Activated naive CD4-positive, alpha-beta T cell treated with anti-CD3 and anti-CD28 coated beads, Interleukin-2, amount 10 ng/mL, durations not matched to agents 7 days and 5 days (primary cell): ENCODE measurements at regions of chr1 and their contacts with region 1.

Region 1: DNA sequence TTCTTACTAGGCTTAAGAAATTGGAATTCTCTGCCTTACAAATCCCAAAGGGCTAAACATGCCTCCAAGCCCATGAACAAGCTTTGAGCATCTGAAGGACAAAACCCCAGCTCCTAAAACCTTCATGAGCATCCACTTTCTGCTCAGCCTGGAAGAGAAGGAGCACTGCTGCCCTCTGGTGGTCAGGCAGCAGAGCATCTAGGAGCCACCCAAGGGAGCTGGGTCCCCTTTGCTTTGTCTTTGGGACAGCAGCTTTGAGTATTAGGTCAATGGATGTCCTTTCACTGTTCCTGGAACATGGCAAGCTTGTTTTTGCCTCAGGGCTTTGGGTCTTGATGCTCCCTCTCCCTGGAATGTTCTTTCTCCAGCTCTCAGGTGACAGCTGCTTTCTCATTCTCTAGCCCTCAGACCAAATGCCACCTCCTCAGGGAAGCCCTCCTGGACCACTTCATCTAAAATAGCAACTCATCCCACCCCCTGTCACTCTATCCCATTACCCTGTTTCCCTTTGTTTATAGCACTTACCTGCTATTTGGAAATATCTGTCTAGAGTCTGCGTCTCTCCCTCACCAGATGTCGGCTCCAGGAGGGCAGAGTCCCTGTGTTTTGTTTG is 25.7 kb downstream of the RAB7B start:
- DNase-seq: peak; percentile 85
- H3K4me3 Mint-ChIP-seq: no peak overlapping the region
- H3K27ac Mint-ChIP-seq: no peak overlapping the region
- H3K4me1 Mint-ChIP-seq: no peaks in the 10 kb centered on the region
- H3K27me3 Mint-ChIP-seq: no peaks in the 10 kb centered on the region

Region 2: GRCh38 chr1:205591522-205592351 is 385.8 kb before region 1 on chr1:
- CTCF ChIA-PET with region 1: interaction called, 16 read pairs
- DNase-seq: peak; percentile 93
- H3K4me3 Mint-ChIP-seq: peak overlapping the region; percentile 84
- H3K27ac Mint-ChIP-seq: peak overlapping the region; percentile 89
- H3K4me1 Mint-ChIP-seq: peaks cover 56% of the 10 kb centered on the region
- H3K27me3 Mint-ChIP-seq: peaks cover 9% of the 10 kb centered on the region

Region 3: GRCh38 chr1:205791568-205792180 is 185.8 kb before region 1 on chr1:
- CTCF ChIA-PET with region 1: interaction called, 186 read pairs
- DNase-seq: peak; percentile 76
- H3K4me3 Mint-ChIP-seq: no peak overlapping the region
- H3K27ac Mint-ChIP-seq: no peak overlapping the region
- H3K4me1 Mint-ChIP-seq: no peaks in the 10 kb centered on the region
- H3K27me3 Mint-ChIP-seq: no peaks in the 10 kb centered on the region

Region 4: DNA sequence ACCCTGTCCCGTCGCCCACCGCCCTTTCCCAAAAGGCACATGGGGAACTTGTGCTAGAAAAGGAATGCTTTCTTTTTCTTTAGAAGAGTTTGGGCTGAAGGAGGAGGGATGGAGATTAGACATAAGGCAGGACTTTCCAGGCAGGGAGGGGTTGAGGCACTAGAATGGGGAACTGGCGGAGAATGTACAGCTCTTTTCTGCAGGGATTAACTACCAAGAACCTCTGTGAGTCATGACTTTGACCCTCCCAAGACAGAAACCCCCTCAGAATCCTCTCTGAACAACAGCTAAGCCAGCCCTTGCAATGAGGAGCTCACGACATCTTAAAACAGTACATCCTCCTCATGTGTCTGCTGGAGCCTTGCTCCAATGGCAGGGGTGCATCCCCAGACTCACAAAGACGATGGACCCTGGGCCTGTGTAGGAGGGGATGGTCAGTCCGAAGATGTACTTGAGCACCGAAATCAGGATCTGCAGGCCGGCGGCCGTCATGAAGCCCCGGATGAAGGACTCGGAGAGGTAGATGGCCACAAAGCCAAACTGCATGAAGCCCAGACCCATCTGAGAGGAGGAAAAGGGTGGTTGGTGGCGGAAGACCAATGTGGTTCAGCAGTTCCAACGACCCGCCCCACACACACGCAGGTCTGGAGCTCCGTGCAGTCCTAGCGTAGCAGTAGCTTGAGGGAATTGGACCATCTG is 47.9 kb before region 1 on chr1:
- CTCF ChIA-PET with region 1: interaction called, 10 read pairs
- DNase-seq: no peak
- H3K4me3 Mint-ChIP-seq: no peak overlapping the region
- H3K27ac Mint-ChIP-seq: no peak overlapping the region
- H3K4me1 Mint-ChIP-seq: no peaks in the 10 kb centered on the region
- H3K27me3 Mint-ChIP-seq: peaks cover 15% of the 10 kb centered on the region

Region 5: GRCh38 chr1:205950280-205950679 is 27.2 kb before region 1 on chr1:
- CTCF ChIA-PET with region 1: interaction called, 19 read pairs
- DNase-seq: no peak
- H3K4me3 Mint-ChIP-seq: no peak overlapping the region
- H3K27ac Mint-ChIP-seq: no peak overlapping the region
- H3K4me1 Mint-ChIP-seq: no peaks in the 10 kb centered on the region
- H3K27me3 Mint-ChIP-seq: peaks cover 59% of the 10 kb centered on the region

Region 6: DNA sequence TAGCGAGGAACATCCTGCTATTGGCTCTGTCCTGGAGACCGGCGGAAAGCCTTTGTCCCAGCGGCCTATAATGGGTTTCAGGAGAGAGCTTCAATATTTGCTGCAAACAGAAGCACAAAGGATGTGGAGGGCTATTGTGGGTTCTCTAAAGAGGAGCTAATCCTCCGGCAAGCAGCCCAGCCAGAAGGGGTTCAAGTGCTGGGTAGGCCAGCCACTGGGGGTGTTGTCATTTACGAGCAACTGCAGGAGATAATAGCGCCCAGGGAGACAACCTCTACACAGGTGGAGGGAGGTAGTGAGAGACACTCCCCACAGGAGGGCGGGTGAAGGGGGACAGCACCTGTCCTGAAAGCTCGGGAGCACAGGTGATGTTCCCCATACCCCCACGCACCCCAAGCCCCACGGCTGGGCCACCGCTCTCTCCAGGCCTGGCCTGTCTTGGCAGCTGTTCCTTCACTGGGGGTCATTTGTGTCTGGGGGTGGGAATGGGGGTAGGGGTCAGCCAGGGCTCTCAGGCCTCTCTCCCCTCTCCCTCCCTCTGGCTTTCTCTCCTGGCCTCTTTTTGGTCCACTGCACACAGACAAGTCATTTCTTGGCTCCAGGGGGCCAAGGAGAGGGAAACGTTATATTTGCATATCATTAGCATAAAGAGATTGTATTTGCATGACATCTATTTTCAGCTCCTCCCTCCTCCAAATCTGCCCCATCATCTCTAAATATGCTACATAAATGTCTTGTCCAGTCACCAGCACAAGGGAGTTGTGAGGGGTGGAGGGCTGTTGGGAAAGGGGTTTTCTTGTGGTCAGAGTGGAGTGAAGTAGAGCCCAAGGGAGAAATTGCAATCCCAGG is 12.2 kb before region 1 on chr1:
- CTCF ChIA-PET with region 1: interaction called, 24 read pairs
- DNase-seq: no peak
- H3K4me3 Mint-ChIP-seq: no peak overlapping the region
- H3K27ac Mint-ChIP-seq: no peak overlapping the region
- H3K4me1 Mint-ChIP-seq: peaks cover 2% of the 10 kb centered on the region
- H3K27me3 Mint-ChIP-seq: peaks cover 45% of the 10 kb centered on the region

Region 7: GRCh38 chr1:206030714-206031113 is 53.2 kb after region 1 on chr1:
- CTCF ChIA-PET with region 1: interaction called, 15 read pairs
- DNase-seq: peak; percentile 85
- H3K4me3 Mint-ChIP-seq: no peak overlapping the region
- H3K27ac Mint-ChIP-seq: no peak overlapping the region
- H3K4me1 Mint-ChIP-seq: peaks cover 23% of the 10 kb centered on the region
- H3K27me3 Mint-ChIP-seq: peaks cover 62% of the 10 kb centered on the region